Right ventricle myocardium inferior (tissue), 1 donor: ENCODE measurements at regions of chr2 and their contacts with region 1.

Region 1: DNA sequence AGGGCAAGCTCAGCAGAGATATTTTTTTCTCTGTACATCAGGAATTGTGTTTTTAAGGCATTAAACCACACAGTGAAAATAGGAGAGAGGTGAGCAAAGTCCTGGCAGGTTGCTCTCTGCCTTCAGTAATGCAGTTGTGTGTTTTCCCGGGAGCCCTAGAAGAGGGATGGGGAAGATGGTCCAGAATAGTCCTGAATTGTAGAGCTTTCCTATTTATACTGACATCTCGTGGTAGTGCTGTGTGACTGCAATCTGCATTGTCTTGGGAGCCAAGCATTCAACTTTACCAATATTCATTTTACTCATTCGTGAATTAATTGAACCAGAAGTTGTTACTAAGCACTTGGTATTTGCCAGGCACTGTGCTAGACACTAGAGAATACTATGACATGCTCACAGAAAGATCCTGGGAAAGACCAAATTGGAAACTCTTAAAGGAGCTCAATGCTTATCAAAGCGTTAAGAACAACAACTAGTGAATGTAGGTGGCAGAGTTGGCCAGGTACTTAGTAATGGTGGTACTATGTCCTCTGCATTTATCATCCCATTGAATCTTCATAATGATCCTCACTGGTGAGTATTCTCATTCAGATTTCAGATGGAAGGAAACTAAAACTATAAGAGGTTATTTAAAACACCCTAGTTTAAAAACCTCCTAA is 214.6 kb downstream of the TRIB2 start:
- DNase-seq: no peak
- ATAC-seq: peak; percentile 86

Region 2: GRCh38 chr2:12169721-12170120 is 761.6 kb before region 1 on chr2:
- intact Hi-C with region 1: loop called (anchors 10 kb)
- DNase-seq: no peak
- ATAC-seq: peak; percentile 64

Region 3: GRCh38 chr2:12543978-12544558 is 387.2 kb before region 1 on chr2:
- intact Hi-C with region 1: loop called (anchors 10 kb)
- DNase-seq: no peak
- ATAC-seq: no peak

Region 4: DNA sequence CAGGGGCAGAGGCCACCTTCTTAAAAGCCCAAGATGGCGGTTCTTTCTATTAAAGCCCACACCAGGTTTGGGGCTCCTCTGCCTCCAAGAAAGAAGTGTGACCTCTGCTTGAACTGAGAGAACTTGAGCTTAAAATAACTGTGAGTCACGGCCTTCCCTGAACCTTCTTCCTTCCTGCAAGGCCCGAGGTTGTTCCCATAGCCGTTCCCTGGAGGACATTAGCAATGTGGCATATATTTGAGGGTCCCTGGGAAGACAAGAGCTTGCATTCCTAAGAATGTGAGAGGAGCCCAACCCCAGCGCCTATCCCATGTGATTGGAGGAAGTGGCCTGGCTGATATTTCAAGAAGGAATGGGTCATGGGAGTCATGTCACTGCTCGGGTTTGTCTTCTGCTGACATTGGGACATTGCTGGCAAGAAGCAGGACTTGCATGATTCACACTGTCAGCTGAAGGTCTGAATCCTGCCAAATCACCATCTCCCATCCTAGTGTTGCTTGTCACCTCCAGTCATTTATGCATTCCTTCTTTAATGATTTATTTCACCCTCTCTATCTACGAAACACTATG is 46.5 kb before region 1 on chr2:
- intact Hi-C with region 1: loop called (anchors 5 kb)
- DNase-seq: peak; percentile 69
- ATAC-seq: peak; percentile 82

Region 5: GRCh38 chr2:12948961-12949353 is 17.6 kb after region 1 on chr2:
- intact Hi-C with region 1: no loop called
- DNase-seq: no peak
- ATAC-seq: no peak